Right ventricle myocardium inferior (tissue), 1 donor: ENCODE measurements at regions of chr15 and their contacts with region 1.

Region 1: GRCh38 chr15:64387562-64388168 is at the start of gene TRIP4:
- DNase-seq: peak; percentile 97
- ATAC-seq: peak; percentile 99
- total RNA-seq, gene TRIP4: 13.1 TPM

Region 2: GRCh38 chr15:64209680-64210334 is 177.9 kb before region 1 on chr15:
- intact Hi-C with region 1: loop called (anchors 10 kb)
- DNase-seq: no peak
- ATAC-seq: no peak

Region 3: GRCh38 chr15:64507293-64507802 is 119.7 kb after region 1 on chr15:
- intact Hi-C with region 1: no loop called
- DNase-seq: peak; percentile 81
- ATAC-seq: peak; percentile 99